CD4-positive, alpha-beta T cell (primary cell): ENCODE measurements at regions of chr15 and their contacts with region 1.

Region 1: DNA sequence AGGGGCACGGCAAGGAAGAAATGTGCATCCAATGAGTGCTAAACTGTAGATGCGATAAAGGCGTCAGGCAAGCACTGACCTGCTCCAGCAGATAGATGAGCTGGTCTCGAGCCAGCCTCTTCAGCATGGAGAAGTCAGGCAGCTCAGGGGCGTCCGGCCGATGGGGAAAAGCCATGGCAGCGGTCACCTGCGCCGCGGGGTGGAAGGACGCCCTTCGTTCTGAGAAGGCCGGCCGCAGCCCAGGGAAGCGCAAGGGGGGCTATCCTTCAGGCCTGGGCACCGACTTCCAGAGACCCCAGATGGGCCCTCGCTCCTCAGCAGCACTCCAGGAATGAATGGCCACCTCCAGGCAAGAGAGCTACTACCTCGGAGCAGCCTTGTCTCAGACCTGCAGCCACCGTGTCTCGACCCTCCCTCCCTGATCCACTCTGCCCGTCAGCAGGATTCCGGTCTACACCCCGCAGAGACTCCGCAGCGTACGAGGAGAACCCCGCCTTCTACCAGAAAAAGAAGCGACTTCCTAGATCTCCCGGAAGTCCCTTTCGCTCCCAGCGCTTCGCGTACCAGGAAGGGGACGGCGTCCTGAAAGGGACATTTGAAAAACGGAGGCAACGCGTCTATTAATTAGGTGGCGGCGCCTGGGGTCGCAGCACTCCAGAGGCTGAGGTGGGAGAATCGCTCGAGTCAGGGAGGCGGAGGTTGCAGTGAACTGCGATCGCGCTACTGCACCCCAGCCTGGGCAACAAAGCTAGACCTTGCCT is at the start of gene VPS33B:
- DNase-seq: peak; percentile 52 to 91 (median 71)
- ATAC-seq: peak; percentile 88
- H3K4me3 ChIP-seq: peak within 1 kb of the TSS; percentile 86
- H3K4me3 Mint-ChIP-seq: peak within 1 kb of the TSS; percentile 96
- H3K27ac ChIP-seq: peak within 1 kb of the TSS; percentile 56 to 62
- H3K27ac Mint-ChIP-seq: peak within 1 kb of the TSS; percentile 88
- H3K4me1 ChIP-seq: peaks cover 30% of the 10 kb centered on the region
- H3K4me1 Mint-ChIP-seq: peaks cover 48% of the 10 kb centered on the region
- H3K27me3 ChIP-seq: no peaks in the 10 kb centered on the region
- H3K27me3 Mint-ChIP-seq: no peaks in the 10 kb centered on the region
- CTCF ChIP-seq: no peak
- total RNA-seq, gene VPS33B: 17.2 to 23.8 TPM

Region 2: GRCh38 chr15:90994417-90995311 is 27.6 kb before region 1 on chr15 and contains the start of gene PRC1:
- CTCF ChIA-PET with region 1: no interaction called
- POLR2A ChIA-PET with region 1: no interaction called
- intact Hi-C with region 1: loop called (anchors 1 to 2 kb)
- DNase-seq: peak; percentile 93 to 99 (median 96)
- ATAC-seq: peak; percentile 95
- H3K4me3 ChIP-seq: peak within 1 kb of the TSS; percentile 100
- H3K4me3 Mint-ChIP-seq: peak within 1 kb of the TSS; percentile 100
- H3K27ac ChIP-seq: peak within 1 kb of the TSS; percentile 89 to 91
- H3K27ac Mint-ChIP-seq: peak within 1 kb of the TSS; percentile 99
- H3K4me1 ChIP-seq: peaks cover 13% of the 10 kb centered on the region
- H3K4me1 Mint-ChIP-seq: peaks cover 21% of the 10 kb centered on the region
- H3K27me3 ChIP-seq: no peaks in the 10 kb centered on the region
- H3K27me3 Mint-ChIP-seq: no peaks in the 10 kb centered on the region
- CTCF ChIP-seq: no peak
- total RNA-seq, gene PRC1: 24.4 to 26.7 TPM